ENCODE measurements at regions of chr11 and their contacts with region 1.

Region 1: GRCh38 chr11:60615497-60615896 is 83.9 kb upstream of the MS4A8 start:
- DNase-seq: no peak
- H3K4me3 Mint-ChIP-seq: no peak overlapping the region
- H3K27ac Mint-ChIP-seq: no peak overlapping the region
- H3K4me1 Mint-ChIP-seq: no peaks in the 10 kb centered on the region
- H3K27me3 Mint-ChIP-seq: peaks cover 15% of the 10 kb centered on the region

Region 2: DNA sequence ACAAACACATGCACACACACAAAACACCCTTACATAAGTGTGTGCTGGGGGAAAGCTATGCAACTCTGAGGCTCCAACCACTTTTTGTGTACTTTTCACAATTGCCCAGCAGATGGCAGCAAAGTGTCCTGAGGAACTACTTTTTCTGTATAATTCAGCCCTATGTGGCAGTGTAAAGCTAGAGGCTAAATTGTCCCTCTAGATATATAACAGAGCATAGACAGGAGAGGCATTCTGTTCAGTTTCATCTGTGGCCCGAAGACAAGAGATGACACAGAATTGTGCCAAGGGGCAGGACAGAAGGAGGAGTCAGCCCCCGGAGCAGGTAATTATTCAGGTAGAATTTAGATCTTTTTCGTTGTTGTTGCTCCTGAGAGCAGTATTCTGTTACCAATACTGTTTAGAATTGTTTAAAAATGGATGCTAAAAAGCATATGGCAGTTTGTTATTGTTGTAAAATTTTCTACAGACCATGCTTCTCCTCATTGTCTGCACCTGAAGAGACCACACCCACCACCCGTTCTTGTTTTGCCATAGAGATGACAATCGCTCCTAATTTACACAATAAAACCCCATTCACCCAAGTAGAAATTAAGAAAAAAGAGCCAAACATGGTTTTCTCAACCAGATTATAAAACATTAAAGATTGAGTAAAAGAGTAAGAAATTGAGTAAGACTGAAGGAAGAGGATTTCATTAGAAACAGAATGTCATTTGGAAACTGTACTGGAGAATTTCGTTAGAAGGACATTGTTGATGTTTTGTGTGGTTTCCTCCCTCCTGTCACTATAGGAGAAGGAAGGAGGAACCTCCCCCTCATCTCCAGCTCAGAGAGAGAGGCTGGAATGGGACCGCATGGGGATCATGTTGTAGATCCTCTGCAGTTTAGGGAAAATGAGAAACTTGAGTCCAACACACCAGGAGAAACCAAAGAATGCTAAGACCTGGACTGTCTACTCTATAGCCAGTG is 251.7 kb before region 1 on chr11:
- intact Hi-C with region 1: loop called (anchors 1 kb)
- DNase-seq: peak; percentile 28
- H3K4me3 Mint-ChIP-seq: no peak overlapping the region
- H3K27ac Mint-ChIP-seq: no peak overlapping the region
- H3K4me1 Mint-ChIP-seq: no peaks in the 10 kb centered on the region
- H3K27me3 Mint-ChIP-seq: peaks cover 7% of the 10 kb centered on the region

Region 3: GRCh38 chr11:60504219-60504905 is 111.1 kb before region 1 on chr11:
- intact Hi-C with region 1: loop called (anchors 10 kb)
- DNase-seq: no peak
- H3K4me3 Mint-ChIP-seq: no peak overlapping the region
- H3K27ac Mint-ChIP-seq: no peak overlapping the region
- H3K4me1 Mint-ChIP-seq: peaks cover 11% of the 10 kb centered on the region
- H3K27me3 Mint-ChIP-seq: peaks cover 37% of the 10 kb centered on the region

Region 4: DNA sequence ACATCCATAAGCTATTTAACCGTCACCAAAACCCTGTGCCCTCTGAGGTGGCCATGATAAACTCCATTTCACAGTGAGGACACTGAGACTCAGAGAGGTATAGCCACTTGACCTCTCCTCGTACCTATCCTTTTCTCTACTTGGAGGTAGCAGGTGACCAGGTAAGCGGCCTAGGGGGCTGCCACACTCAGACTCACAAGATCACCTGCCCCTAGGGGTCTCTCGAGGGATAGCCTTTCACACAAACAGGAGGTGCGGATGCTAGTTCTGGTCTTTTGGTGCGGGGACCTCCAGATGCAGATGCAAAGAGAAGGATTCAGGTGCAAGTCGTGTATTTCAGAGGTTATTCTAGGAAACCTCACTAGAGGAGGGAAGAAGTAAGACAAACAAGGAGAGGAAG is 123.6 kb after region 1 on chr11:
- intact Hi-C with region 1: no loop called
- DNase-seq: no peak
- H3K4me3 Mint-ChIP-seq: no peak overlapping the region
- H3K27ac Mint-ChIP-seq: no peak overlapping the region
- H3K4me1 Mint-ChIP-seq: no peaks in the 10 kb centered on the region
- H3K27me3 Mint-ChIP-seq: peaks cover 6% of the 10 kb centered on the region